Left cardiac atrium (tissue), 4 donors: ENCODE measurements at regions of chr7 and their contacts with region 1.

Region 1: DNA sequence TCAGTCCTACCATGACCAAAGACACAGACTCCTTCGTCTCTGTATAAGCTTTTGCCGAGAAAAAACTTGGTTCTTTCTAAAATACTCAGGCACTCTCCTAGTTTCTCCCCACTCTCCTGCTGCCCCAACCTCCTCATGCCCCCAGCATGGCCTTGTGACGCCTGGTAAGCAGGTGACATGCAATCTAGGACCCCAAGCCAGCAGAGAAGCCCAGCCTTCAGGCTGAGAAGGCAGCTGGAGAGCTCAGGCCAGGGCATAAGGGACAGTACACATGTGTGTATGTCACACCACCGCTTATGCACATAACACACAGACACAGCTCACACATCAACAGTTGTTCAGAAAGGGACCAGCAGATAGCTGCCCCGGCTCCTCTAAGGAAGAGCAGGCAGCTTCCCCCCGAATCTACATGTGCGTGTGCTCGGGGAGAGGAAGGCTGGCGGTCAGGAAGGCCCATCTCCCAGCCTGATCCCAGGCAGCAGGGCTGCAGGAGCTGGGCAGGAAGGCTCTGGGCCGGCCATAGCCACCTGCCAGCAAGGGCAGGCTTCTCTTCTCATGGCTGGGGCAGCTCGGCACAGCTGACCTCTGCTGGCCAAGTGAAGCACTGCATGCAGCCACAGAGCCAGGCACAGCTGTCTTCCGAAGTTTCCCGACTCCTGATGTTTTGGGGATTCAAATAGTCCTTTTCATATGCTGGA is 8.5 kb downstream of the DDX56 start:
- DNase-seq: peak; percentile 64
- ATAC-seq: peak; percentile 72 to 82

Region 2: GRCh38 chr7:44218418-44219201 is 346.6 kb before region 1 on chr7:
- intact Hi-C with region 1: loop called in 1 of 2 experiments (anchors 10 kb)
- DNase-seq: no peak
- ATAC-seq: peak; percentile 4 to 82

Region 3: GRCh38 chr7:44240983-44241510 is 324.2 kb before region 1 on chr7:
- intact Hi-C with region 1: loop called in 1 of 2 experiments (anchors 10 kb)
- DNase-seq: peak; percentile 77
- ATAC-seq: peak; percentile 82 to 87

Region 4: DNA sequence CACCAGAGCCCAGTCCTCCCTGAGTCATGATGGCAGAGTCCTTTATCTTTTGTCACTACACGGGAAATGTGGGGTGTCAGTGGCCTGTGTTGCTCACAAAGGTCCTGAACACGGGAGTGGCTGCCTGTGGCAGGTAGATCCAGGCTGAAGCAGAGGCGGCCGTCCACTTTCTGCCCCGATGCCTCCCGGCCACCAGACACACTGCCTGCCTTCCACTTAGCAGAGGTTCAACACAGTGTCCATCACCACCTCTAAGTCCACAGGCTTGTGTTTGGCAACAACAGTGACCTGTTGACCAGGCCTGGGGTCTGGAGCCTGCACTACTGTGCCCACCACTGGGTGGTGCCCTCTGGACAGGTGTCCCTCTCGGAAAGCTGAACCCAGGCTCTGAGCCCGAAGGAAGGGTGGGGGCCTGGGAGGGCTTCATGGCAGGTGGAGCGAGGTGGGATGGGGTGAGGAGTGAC is 190.0 kb before region 1 on chr7:
- intact Hi-C with region 1: loop called in 1 of 2 experiments (anchors 10 kb)
- DNase-seq: peak; percentile 37
- ATAC-seq: peak; percentile 38 to 61

Region 5: DNA sequence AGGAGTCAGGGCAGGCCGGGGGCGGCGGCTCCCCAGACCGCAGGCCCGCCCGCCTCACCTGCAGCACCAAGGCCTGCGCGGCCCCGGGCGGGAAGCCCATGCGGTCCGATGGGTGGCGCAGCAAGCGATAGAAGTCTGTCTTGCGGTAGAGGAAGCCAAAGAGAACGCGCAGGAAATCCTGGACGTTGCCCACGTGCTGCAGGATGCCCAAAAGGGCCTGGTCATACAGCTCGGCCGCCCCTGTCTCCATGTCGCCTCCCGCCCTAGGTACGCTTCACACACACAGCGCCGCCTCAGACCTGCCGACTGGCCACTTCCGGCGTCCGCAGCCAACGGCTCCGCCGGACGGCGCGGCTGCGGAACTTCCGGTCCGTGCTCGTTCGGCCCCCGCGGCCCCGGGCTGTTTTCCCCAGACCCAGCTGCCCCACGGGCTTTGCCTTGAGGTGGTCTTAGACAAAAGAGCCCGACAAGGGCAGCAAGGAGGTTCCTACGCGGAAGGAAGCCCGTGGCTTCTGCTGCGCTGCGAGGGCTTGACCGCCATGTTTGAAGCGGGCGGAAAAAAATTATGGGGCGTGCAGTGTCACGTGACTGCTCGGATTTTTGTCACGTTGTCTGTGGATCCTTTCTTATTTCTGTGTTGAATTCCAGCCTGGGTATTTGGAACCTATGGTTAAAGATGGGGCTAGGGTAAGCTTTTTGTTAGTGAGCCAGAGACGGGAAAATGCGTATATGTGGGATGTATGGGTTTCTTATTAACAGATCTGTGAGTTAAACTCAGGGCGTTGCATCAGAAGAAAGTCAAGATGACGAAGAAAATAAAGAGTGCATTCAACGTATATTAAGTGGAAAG is 74.7 kb before region 1 on chr7 and contains the start of gene NUDCD3:
- intact Hi-C with region 1: loop called in 1 of 2 experiments (anchors 10 kb)
- DNase-seq: peak; percentile 89
- ATAC-seq: peak; percentile 96 to 98
- total RNA-seq, gene NUDCD3: 83.7 to 104 TPM